ENCODE measurements at regions of chr6 and their contacts with region 1.

Region 1: DNA sequence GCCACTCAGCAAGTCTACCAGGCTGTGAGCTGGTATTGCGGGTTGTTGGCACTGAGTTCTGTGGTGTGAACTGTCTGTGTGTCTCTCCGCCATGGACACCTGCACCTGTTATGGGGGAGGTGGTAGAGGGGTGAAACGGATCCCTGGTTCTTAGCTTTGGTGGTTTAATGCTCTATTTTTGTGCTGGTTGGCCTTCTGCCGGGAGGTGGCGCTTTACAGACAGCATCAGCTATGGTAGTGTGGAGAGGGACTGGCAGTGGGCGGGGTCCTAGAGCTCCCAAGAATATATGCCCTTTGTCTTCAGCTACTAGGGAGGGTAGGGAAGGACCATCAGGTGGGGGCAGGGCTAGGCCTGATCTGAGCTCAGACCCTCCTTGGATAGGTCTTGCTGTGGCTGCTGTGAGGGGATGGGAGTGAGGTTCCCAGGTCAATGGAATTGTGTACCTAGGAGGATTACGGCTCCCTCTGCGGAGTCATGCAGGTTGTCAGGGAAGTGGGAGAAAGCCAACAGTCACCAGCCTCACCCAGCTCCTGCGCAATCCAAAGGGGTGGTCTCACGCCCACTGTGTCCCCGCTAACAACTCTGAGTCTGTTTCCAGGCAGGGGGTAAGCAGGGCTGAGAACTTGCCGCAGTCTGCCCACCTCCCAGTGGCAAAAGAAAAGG is 154.3 kb downstream of the CCDC170 start:
- DNase-seq: peak; percentile 89
- ATAC-seq: peak; percentile 99
- H3K4me3 Mint-ChIP-seq: no peak overlapping the region
- H3K27ac Mint-ChIP-seq: peak overlapping the region; percentile 44; the same call in 1 of the 2 replicates
- H3K4me1 Mint-ChIP-seq: peaks cover 19% of the 10 kb centered on the region
- H3K27me3 Mint-ChIP-seq: no peaks in the 10 kb centered on the region; the same call in 1 of the 2 replicates
- CTCF ChIP-seq: peak; percentile 50; the same call in 1 of the 2 replicates

Region 2: DNA sequence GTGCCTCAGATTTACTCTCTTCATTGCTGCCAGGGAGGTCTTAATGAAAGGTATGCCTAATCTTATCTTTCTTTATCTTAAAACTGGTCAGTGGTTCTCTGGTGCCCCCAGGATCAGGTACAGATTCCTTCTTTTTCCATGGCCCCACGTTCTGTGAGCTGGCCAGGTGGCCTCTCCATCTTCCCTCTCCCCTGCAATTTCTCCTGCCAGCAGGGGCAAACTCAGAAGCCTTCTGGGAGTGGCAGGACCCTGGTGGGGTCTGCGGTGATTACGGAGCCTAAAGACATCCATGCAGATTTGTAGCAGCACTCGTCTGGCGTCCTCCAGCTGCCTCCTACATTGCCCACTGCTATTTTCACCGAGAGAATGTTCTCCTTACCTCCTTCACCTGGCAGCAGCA is 58.4 kb before region 1 on chr6:
- CTCF ChIA-PET with region 1: interaction called, 10 read pairs
- POLR2A ChIA-PET with region 1: no interaction called
- DNase-seq: peak; percentile 33
- ATAC-seq: peak; percentile 94
- H3K4me3 Mint-ChIP-seq: no peak overlapping the region
- H3K27ac Mint-ChIP-seq: no peak overlapping the region
- H3K4me1 Mint-ChIP-seq: peaks cover 19% of the 10 kb centered on the region
- H3K27me3 Mint-ChIP-seq: no peaks in the 10 kb centered on the region
- CTCF ChIP-seq: no peak

Region 3: DNA sequence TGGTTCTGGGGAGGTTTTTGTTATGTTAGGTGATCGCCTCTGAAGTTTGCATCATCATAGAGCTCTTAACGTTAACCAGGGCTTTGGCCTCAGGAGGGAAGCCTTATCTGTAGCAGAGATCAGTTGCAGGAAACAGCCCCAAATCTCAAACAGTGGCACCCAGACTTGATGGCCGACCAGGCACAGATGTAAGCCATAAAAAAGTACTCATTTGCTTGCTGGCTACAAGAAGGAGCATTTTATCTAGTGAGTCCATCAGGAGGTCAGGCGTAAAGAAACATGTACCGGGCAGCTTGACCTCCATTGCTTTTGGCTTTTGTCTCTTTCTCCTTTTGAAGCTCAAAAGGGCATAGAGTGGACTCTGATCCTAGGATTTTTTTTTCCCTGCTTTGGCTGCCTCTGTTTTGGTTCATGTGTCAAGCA is 32.0 kb before region 1 on chr6:
- CTCF ChIA-PET with region 1: interaction called, 10 read pairs
- POLR2A ChIA-PET with region 1: no interaction called
- DNase-seq: no peak
- ATAC-seq: peak; percentile 87
- H3K4me3 Mint-ChIP-seq: peak overlapping the region; percentile 26; the same call in 1 of the 2 replicates
- H3K27ac Mint-ChIP-seq: peak overlapping the region; percentile 96
- H3K4me1 Mint-ChIP-seq: peaks cover 49% of the 10 kb centered on the region
- H3K27me3 Mint-ChIP-seq: no peaks in the 10 kb centered on the region
- CTCF ChIP-seq: no peak

Region 4: GRCh38 chr6:151661928-151662327 is 13.8 kb after region 1 on chr6:
- CTCF ChIA-PET with region 1: interaction called, 11 read pairs
- POLR2A ChIA-PET with region 1: no interaction called
- DNase-seq: peak; percentile 69
- ATAC-seq: peak; percentile 97
- H3K4me3 Mint-ChIP-seq: no peak overlapping the region
- H3K27ac Mint-ChIP-seq: no peak overlapping the region
- H3K4me1 Mint-ChIP-seq: no peaks in the 10 kb centered on the region
- H3K27me3 Mint-ChIP-seq: no peaks in the 10 kb centered on the region
- CTCF ChIP-seq: peak; percentile 63

Measured in WTC11 (cell line).